ENCODE measurements at regions of chr1 and their contacts with region 1.

Region 1: DNA sequence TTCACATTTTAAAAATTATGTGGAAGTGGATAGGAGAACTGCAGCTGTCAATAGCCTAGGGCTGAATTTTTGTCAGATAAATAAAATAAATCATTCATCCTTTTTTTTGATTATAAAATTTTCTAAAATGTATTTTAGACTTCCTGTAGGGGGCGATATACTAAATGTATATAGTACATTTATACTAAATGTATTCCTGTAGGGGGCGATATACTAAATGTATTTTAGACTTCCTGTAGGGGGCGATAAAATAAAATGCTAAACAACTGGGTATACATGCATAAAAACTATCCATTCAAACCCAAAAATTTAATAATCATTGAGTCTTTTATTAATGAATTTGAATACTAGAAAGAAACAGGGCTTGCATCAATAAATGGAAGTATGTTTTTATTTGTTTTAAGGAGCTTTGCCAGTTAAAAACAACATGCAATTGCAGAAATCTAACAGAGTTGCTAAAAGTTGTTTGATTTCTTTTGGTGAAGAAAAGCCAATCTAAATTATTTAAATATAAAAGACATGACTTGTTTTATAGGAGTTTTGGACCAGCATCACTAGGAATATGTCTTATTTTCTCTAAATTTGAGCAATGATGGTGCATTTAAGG is 31.4 kb downstream of the CLCA1 start:
- DNase-seq: peak in 4 of 5 donors; percentile 66 to 72 (median 69)
- H3K4me3 ChIP-seq: no peak overlapping the region
- H3K4me3 Mint-ChIP-seq: no peak overlapping the region
- H3K27ac ChIP-seq: no peak overlapping the region
- H3K27ac Mint-ChIP-seq: peak overlapping the region in 2 of 7 donors; percentile 7 to 37
- H3K4me1 ChIP-seq: no peaks in the 10 kb centered on the region
- H3K4me1 Mint-ChIP-seq: peaks cover 3 to 22% (median 5%) of the 10 kb centered on the region in 4 donors
- H3K27me3 ChIP-seq: no peaks in the 10 kb centered on the region
- H3K27me3 Mint-ChIP-seq: peaks cover 10% of the 10 kb centered on the region in 2 donors

Region 2: GRCh38 chr1:86380257-86380861 is 119.7 kb before region 1 on chr1:
- CTCF ChIA-PET with region 1: interaction called, 117 read pairs
- POLR2A ChIA-PET with region 1: interaction called, 5 read pairs
- intact Hi-C with region 1: loop called (anchors 1 kb)
- DNase-seq: peak in 4 of 5 donors; percentile 49 to 59 (median 54)
- H3K4me3 ChIP-seq: no peak overlapping the region
- H3K4me3 Mint-ChIP-seq: peak overlapping the region in 2 of 8 donors; percentile 38 to 55
- H3K27ac ChIP-seq: no peak overlapping the region
- H3K27ac Mint-ChIP-seq: peak overlapping the region in 3 of 7 donors; percentile 32 to 48 (median 42)
- H3K4me1 ChIP-seq: peaks cover 17% of the 10 kb centered on the region
- H3K4me1 Mint-ChIP-seq: peaks cover 8 to 30% (median 12%) of the 10 kb centered on the region in 4 donors
- H3K27me3 ChIP-seq: no peaks in the 10 kb centered on the region
- H3K27me3 Mint-ChIP-seq: no peaks in the 10 kb centered on the region

Region 3: GRCh38 chr1:86395771-86396497 is 104.2 kb before region 1 on chr1 and contains the start of gene ODF2L:
- CTCF ChIA-PET with region 1: interaction called, 32 read pairs
- POLR2A ChIA-PET with region 1: interaction called, 3 read pairs
- intact Hi-C with region 1: no loop called
- DNase-seq: peak; percentile 90 to 94 (median 92)
- H3K4me3 ChIP-seq: peak within 1 kb of the TSS; percentile 77 to 87
- H3K4me3 Mint-ChIP-seq: peak within 1 kb of the TSS; percentile 94 to 99 (median 98)
- H3K27ac ChIP-seq: peak within 1 kb of the TSS; percentile 92
- H3K27ac Mint-ChIP-seq: peak within 1 kb of the TSS; percentile 97 to 100 (median 99)
- H3K4me1 ChIP-seq: peaks cover 56% of the 10 kb centered on the region
- H3K4me1 Mint-ChIP-seq: peaks cover 43 to 68% (median 51%) of the 10 kb centered on the region in 4 donors
- H3K27me3 ChIP-seq: no peaks in the 10 kb centered on the region
- H3K27me3 Mint-ChIP-seq: no peaks in the 10 kb centered on the region
- total RNA-seq, gene ODF2L: 97.3 to 98.3 TPM

Region 4: DNA sequence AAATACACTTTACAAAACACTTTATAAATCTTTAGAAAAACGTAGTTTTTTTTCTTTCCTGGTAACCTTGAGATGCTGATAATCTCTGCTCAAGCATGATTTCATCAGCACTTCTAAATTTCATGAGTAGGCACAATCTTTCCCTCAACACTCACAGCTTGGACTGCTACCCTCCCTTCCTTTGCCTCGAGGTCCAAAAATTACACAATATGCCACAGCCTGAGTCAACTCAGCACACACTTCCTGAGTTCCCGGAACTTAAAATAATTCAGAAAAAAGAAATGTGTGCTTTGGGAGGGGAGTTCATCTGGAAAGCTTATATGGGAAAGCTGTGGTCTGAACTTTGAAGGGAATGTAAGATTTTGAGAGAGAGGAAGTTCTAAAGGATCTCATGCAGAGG is 70.3 kb before region 1 on chr1:
- CTCF ChIA-PET with region 1: interaction called, 10 read pairs
- POLR2A ChIA-PET with region 1: no interaction called
- intact Hi-C with region 1: no loop called
- DNase-seq: no peak
- H3K4me3 ChIP-seq: no peak overlapping the region
- H3K4me3 Mint-ChIP-seq: no peak overlapping the region
- H3K27ac ChIP-seq: no peak overlapping the region
- H3K27ac Mint-ChIP-seq: no peak overlapping the region
- H3K4me1 ChIP-seq: peaks cover 6% of the 10 kb centered on the region
- H3K4me1 Mint-ChIP-seq: no peaks in the 10 kb centered on the region
- H3K27me3 ChIP-seq: no peaks in the 10 kb centered on the region
- H3K27me3 Mint-ChIP-seq: peaks cover 2 to 3% of the 10 kb centered on the region in 2 donors

Region 5: DNA sequence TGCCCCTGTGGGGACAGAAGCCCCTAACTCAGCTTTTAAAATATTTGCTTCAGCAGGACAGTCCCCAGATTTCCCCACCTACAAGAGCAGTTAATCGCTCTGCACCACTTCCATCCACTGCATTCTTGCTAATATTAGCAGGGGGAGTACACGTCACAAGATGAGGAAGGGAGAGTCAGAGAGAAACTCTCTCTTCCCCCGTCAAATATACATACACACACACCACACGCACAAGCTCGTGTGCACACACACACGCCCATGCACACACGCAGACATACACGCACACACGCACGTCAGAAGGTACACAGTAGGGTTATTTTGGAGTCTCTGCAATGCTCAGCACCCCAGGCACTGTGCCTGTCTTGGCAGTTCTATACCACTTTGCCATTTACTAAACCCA is 29.2 kb before region 1 on chr1:
- CTCF ChIA-PET with region 1: interaction called, 26 read pairs
- POLR2A ChIA-PET with region 1: no interaction called
- intact Hi-C with region 1: loop called (anchors 2 kb)
- DNase-seq: no peak
- H3K4me3 ChIP-seq: no peak overlapping the region
- H3K4me3 Mint-ChIP-seq: no peak overlapping the region
- H3K27ac ChIP-seq: no peak overlapping the region
- H3K27ac Mint-ChIP-seq: no peak overlapping the region
- H3K4me1 ChIP-seq: no peaks in the 10 kb centered on the region
- H3K4me1 Mint-ChIP-seq: peaks cover 0 to 3% (median 0%) of the 10 kb centered on the region in 4 donors
- H3K27me3 ChIP-seq: peaks cover 3% of the 10 kb centered on the region
- H3K27me3 Mint-ChIP-seq: peaks cover 6 to 7% of the 10 kb centered on the region in 2 donors

Region 6: GRCh38 chr1:86515597-86515996 is 15.5 kb after region 1 on chr1:
- CTCF ChIA-PET with region 1: interaction called, 24 read pairs
- POLR2A ChIA-PET with region 1: no interaction called
- intact Hi-C with region 1: no loop called
- DNase-seq: no peak
- H3K4me3 ChIP-seq: no peak overlapping the region
- H3K4me3 Mint-ChIP-seq: no peak overlapping the region
- H3K27ac ChIP-seq: no peak overlapping the region
- H3K27ac Mint-ChIP-seq: no peak overlapping the region
- H3K4me1 ChIP-seq: no peaks in the 10 kb centered on the region
- H3K4me1 Mint-ChIP-seq: no peaks in the 10 kb centered on the region
- H3K27me3 ChIP-seq: no peaks in the 10 kb centered on the region
- H3K27me3 Mint-ChIP-seq: no peaks in the 10 kb centered on the region

Region 7: GRCh38 chr1:86582161-86582560 is 82.1 kb after region 1 on chr1:
- CTCF ChIA-PET with region 1: no interaction called
- POLR2A ChIA-PET with region 1: no interaction called
- intact Hi-C with region 1: no loop called
- DNase-seq: no peak
- H3K4me3 ChIP-seq: no peak overlapping the region
- H3K4me3 Mint-ChIP-seq: no peak overlapping the region
- H3K27ac ChIP-seq: no peak overlapping the region
- H3K27ac Mint-ChIP-seq: no peak overlapping the region
- H3K4me1 ChIP-seq: no peaks in the 10 kb centered on the region
- H3K4me1 Mint-ChIP-seq: no peaks in the 10 kb centered on the region
- H3K27me3 ChIP-seq: no peaks in the 10 kb centered on the region
- H3K27me3 Mint-ChIP-seq: peaks cover 0 to 1% of the 10 kb centered on the region in 2 donors

Region 8: DNA sequence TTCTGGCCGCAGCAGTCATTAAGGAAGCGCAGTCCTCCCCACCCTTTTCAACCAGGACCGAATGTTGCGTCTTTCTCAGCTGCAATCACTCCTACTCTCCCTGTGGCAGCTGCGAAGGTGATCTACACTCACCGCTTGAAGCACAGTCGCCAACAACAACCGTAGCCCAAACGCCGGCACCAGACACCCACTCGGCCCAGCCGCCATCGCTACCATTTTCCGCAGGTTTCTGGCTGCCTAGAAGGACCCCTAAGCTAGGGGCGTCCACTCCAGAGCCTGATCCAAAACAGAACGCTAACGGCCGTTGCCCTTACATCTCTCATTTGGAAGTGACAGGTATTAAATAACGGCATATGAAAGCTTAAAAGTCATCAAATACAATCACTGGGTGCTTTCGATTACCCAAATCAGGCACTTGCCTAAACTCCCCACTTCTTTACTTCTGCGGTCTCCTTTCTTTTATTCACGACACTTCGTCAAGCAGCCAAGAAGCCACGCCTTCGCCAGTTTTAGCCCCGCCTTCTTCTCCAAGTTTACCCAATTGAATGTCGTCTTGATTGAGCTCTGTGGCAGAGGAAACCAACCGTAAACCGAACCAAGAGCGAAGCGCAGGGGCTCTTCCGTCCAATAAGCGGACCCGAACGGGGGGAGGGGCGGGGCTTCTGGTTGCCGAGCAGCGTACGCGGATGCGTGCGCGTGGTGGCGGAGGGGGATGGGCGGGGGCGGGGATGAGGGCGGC is 414.0 kb after region 1 on chr1 and contains the start of gene SELENOF:
- CTCF ChIA-PET with region 1: no interaction called
- POLR2A ChIA-PET with region 1: no interaction called
- intact Hi-C with region 1: loop called (anchors 5 kb)
- DNase-seq: peak; percentile 98 to 100 (median 99)
- H3K4me3 ChIP-seq: peak within 1 kb of the TSS; percentile 82 to 91
- H3K4me3 Mint-ChIP-seq: no peak within 1 kb of the TSS
- H3K27ac ChIP-seq: peak within 1 kb of the TSS; percentile 81
- H3K27ac Mint-ChIP-seq: peak within 1 kb of the TSS in 1 of 7 donors; percentile 31
- H3K4me1 ChIP-seq: peaks cover 47% of the 10 kb centered on the region
- H3K4me1 Mint-ChIP-seq: peaks cover 29 to 43% (median 41%) of the 10 kb centered on the region in 4 donors
- H3K27me3 ChIP-seq: no peaks in the 10 kb centered on the region
- H3K27me3 Mint-ChIP-seq: no peaks in the 10 kb centered on the region
- total RNA-seq, gene SELENOF: 151 to 169 TPM

Measured in CD4-positive, alpha-beta memory T cell (primary cell).